ENCODE measurements at regions of chr20 and their contacts with region 1.

Region 1: DNA sequence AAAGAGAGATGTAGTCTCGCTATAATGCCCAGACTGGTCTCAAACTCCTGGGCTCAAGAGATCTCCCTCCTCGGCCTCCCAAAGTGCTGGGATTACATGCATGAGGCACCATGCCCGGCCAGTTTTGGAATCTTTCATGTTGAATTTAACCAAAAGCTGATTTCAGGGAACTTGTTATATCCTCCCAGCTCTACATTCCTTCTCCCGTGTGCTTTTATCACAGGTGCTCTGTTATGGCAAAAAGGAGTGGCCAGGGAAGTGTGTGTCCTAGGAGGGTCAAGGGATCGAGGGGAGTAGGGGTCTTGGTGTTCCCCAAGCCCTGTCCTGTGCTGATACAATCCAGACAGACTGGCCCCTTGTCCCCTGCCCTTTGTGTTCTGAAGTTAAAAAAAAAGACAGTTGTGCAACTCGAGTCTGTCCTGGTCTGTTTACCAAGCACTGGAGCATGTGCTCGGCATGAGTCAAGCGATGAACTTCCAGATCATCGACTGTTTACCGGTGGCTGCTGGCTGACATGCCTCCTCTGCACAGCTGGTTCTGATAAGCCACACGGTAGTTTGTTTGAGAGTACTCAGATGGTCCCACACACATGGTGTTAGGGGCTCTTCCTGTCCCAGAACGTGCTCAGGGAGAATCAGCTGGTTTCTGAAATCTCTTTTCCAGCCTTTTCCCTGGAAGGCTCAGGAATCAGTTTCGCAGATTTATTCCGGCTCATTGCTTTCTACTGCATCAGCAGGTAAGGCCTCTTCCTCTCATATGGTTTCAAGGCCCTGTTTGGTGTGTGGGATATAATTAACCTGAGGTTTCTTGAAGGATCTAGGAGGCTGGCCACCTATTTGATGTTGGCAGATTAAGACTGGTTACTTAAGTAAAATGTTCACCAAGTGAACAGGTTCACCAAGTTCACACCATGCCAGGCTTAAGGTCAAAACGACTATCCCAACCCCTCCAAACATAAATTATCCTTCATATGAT is 52.6 kb upstream of the NAA20 start:
- DNase-seq: no peak
- H3K4me3 Mint-ChIP-seq: no peak overlapping the region
- H3K27ac Mint-ChIP-seq: no peak overlapping the region
- H3K4me1 Mint-ChIP-seq: no peaks in the 10 kb centered on the region
- H3K27me3 Mint-ChIP-seq: no peaks in the 10 kb centered on the region
- CTCF ChIP-seq: no peak

Region 2: GRCh38 chr20:19934792-19935491 is 29.6 kb before region 1 on chr20:
- CTCF ChIA-PET with region 1: no interaction called
- intact Hi-C with region 1: loop called (anchors 2 kb)
- DNase-seq: peak; percentile 12
- H3K4me3 Mint-ChIP-seq: peak overlapping the region; percentile 48
- H3K27ac Mint-ChIP-seq: no peak overlapping the region
- H3K4me1 Mint-ChIP-seq: peaks cover 8% of the 10 kb centered on the region
- H3K27me3 Mint-ChIP-seq: no peaks in the 10 kb centered on the region
- CTCF ChIP-seq: no peak

Region 3: GRCh38 chr20:20024942-20025341 is 60.4 kb after region 1 on chr20:
- CTCF ChIA-PET with region 1: interaction called, 10 read pairs
- intact Hi-C with region 1: no loop called
- DNase-seq: no peak
- H3K4me3 Mint-ChIP-seq: no peak overlapping the region
- H3K27ac Mint-ChIP-seq: no peak overlapping the region
- H3K4me1 Mint-ChIP-seq: no peaks in the 10 kb centered on the region
- H3K27me3 Mint-ChIP-seq: no peaks in the 10 kb centered on the region
- CTCF ChIP-seq: no peak

Region 4: DNA sequence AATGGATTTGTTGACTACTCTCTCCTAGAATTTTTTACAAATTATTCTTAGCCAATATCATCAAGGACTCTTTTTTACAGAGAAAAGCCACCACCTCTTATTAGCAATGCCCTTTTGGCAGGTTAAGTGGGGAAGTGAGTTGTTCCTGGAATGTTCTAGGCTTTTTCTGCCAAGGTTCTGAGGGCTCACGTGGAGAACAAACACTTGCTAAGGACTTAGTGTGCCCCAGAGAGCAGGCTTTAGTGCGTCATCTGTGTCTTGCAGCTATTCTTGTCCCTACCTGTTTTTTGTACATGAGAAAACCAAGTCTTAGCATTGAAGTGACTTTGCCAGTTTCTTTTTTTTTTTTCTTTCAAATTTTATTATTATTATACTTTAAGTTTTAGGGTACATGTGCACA is 121.2 kb after region 1 on chr20:
- CTCF ChIA-PET with region 1: no interaction called
- intact Hi-C with region 1: no loop called
- DNase-seq: no peak
- H3K4me3 Mint-ChIP-seq: no peak overlapping the region
- H3K27ac Mint-ChIP-seq: no peak overlapping the region
- H3K4me1 Mint-ChIP-seq: no peaks in the 10 kb centered on the region
- H3K27me3 Mint-ChIP-seq: peaks cover 13% of the 10 kb centered on the region
- CTCF ChIP-seq: no peak

Region 5: DNA sequence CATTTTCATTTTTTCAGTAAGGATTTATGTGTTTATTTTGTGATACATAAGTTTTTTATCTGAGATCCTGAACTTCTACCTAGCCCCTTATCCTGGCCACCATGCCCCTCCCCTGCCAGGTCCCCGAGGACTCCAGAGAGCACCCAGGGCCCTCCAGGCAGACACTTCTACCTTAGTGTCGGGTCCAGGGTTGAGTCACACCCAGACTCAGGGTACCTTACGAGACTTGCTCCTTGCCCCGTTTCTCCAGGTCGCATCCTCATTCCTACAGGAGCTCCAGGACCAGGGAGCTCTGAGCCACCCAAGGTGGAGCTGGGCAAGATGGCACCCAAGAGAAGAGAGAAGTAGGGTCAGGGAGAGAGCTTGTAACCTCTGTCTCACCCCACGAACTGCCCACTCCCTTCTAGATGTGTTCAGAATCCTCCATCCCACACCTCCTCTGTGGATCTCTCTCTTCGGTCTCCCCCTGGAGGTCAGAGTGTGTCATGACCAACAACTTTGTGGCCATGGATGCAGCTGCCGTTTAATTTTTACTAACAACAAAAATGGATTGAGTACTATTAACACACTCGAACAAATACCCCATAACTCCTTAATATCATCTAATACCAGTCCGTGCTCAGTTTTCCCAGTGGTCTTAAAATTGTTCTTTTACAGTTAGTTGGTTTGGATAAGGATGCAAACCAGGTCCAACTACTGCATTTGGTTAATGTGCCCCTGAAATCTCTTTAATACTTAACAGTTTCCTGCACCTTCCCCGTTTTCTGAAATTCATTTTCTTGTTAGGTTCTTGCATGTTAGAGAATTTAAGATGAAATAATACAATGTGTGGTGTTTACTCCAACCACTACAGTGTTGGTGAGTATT is 272.8 kb after region 1 on chr20:
- CTCF ChIA-PET with region 1: no interaction called
- intact Hi-C with region 1: no loop called
- DNase-seq: peak; percentile 13
- H3K4me3 Mint-ChIP-seq: no peak overlapping the region
- H3K27ac Mint-ChIP-seq: no peak overlapping the region
- H3K4me1 Mint-ChIP-seq: no peaks in the 10 kb centered on the region
- H3K27me3 Mint-ChIP-seq: peaks cover 24% of the 10 kb centered on the region
- CTCF ChIP-seq: no peak

Measured in Calu3 (cell line).